CD4-positive, alpha-beta T cell (primary cell): ENCODE measurements at regions of chr18 and their contacts with region 1.

Region 1: DNA sequence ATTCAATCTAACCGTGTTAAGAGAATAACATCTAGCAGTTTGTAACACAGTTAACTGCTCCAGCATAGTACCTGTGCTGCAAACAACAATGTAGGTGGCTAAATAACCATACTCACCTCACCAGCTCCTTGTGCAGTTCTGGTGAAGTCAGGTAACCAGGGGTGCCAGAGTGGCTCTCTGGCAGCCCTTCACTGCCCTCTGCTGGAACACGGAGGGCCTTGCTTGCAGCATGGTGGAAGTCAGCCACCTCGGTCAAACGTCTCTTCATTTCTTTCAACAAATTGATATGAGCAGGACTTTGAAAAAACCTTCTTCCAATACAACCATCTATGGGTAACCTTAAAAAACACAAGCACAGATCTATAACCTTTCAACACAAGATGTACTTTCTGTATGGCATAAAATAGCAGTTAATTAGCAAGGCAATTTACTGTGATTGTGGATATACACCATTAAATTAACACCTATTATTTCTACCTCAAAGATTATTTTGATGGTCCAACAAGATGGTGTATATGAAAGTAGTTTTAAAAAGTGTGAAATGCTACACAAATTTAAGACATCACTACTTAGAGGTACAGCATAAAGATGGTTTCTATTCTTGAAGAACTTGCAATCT is 56.6 kb downstream of the EPG5 start:
- DNase-seq: peak; percentile 39 to 78 (median 56)
- ATAC-seq: peak; percentile 81
- H3K4me3 ChIP-seq: no peak overlapping the region
- H3K4me3 Mint-ChIP-seq: no peak overlapping the region
- H3K27ac ChIP-seq: no peak overlapping the region
- H3K27ac Mint-ChIP-seq: no peak overlapping the region
- H3K4me1 ChIP-seq: no peaks in the 10 kb centered on the region
- H3K4me1 Mint-ChIP-seq: no peaks in the 10 kb centered on the region
- H3K27me3 ChIP-seq: no peaks in the 10 kb centered on the region
- H3K27me3 Mint-ChIP-seq: no peaks in the 10 kb centered on the region
- CTCF ChIP-seq: peak; percentile 69

Region 2: DNA sequence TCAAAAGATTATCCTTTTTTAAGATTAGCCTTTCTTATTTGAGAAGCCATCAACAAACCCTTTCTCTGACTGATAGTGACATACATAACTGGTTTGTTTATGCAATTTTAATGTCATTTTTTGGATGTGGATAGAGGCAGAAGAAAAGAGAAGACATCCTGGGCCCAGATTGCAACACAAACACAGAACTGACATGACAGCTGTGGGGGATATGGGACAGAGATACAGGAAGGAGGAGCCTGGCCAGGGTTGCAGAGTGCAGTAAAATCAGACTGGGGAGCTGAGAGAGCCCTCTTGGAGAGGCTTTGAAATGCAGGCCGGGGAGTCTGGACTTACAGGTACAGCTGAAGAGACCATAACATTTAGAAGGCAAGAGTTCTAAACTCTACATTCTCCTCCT is 19.9 kb before region 1 on chr18:
- CTCF ChIA-PET with region 1: no interaction called
- POLR2A ChIA-PET with region 1: no interaction called
- intact Hi-C with region 1: loop called in 1 of 2 experiments (anchors 1 kb)
- DNase-seq: peak in 2 of 14 experiments; percentile 11
- ATAC-seq: no peak
- H3K4me3 ChIP-seq: no peak overlapping the region
- H3K4me3 Mint-ChIP-seq: no peak overlapping the region
- H3K27ac ChIP-seq: no peak overlapping the region
- H3K27ac Mint-ChIP-seq: no peak overlapping the region
- H3K4me1 ChIP-seq: no peaks in the 10 kb centered on the region
- H3K4me1 Mint-ChIP-seq: no peaks in the 10 kb centered on the region
- H3K27me3 ChIP-seq: no peaks in the 10 kb centered on the region
- H3K27me3 Mint-ChIP-seq: no peaks in the 10 kb centered on the region
- CTCF ChIP-seq: no peak

Region 3: GRCh38 chr18:45981821-45982220 is 71.3 kb after region 1 on chr18:
- CTCF ChIA-PET with region 1: no interaction called
- POLR2A ChIA-PET with region 1: no interaction called
- intact Hi-C with region 1: no loop called
- DNase-seq: no peak
- ATAC-seq: no peak
- H3K4me3 ChIP-seq: no peak overlapping the region
- H3K4me3 Mint-ChIP-seq: no peak overlapping the region
- H3K27ac ChIP-seq: no peak overlapping the region
- H3K27ac Mint-ChIP-seq: no peak overlapping the region
- H3K4me1 ChIP-seq: no peaks in the 10 kb centered on the region
- H3K4me1 Mint-ChIP-seq: no peaks in the 10 kb centered on the region
- H3K27me3 ChIP-seq: no peaks in the 10 kb centered on the region
- H3K27me3 Mint-ChIP-seq: no peaks in the 10 kb centered on the region
- CTCF ChIP-seq: no peak

Region 4: DNA sequence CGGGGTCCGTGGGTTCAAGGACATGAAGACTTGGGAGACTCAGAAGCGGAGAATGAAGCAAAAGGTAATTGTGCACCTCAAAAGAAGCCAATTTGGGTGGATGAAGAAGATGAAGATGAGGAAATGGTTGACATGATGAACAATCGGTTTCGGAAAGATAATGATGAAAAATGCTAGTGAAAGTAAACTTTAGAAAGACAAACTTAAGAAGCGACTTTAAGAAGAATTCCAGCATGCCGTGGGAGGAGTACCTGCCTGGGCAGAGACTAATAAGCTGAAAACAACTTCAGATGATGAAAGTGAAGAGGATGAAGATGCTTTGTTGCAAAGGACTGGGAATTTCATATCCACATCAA is 118.0 kb after region 1 on chr18:
- CTCF ChIA-PET with region 1: no interaction called
- POLR2A ChIA-PET with region 1: no interaction called
- intact Hi-C with region 1: no loop called
- DNase-seq: no peak
- ATAC-seq: no peak
- H3K4me3 ChIP-seq: peak overlapping the region; percentile 78
- H3K4me3 Mint-ChIP-seq: peak overlapping the region; percentile 94
- H3K27ac ChIP-seq: no peak overlapping the region
- H3K27ac Mint-ChIP-seq: peak overlapping the region; percentile 67
- H3K4me1 ChIP-seq: peaks cover 11% of the 10 kb centered on the region
- H3K4me1 Mint-ChIP-seq: peaks cover 10% of the 10 kb centered on the region
- H3K27me3 ChIP-seq: no peaks in the 10 kb centered on the region
- H3K27me3 Mint-ChIP-seq: peaks cover 6% of the 10 kb centered on the region
- CTCF ChIP-seq: no peak